CD4-positive, alpha-beta T cell (primary cell): ENCODE measurements at regions of chr10 and their contacts with region 1.

Region 1: DNA sequence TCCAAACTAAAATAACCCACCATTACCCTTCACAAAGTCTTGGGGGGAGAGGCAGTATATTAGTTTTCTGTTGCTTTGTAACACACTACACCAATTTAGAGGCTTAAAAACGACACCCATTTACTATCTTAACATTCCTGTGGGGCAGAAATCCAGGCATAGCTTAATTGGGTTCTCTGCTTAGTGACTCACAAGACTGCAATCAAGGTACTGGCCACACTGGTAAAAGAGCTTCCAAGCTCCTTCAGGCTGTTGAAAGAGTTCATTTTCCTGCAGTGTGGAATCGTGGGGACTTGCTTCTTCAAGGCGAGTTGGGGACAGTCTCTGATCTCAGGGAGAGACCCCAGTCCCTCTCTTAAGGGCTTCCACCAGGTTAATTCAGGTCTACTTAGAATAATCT is 139.1 kb downstream of the XPNPEP1 start:
- DNase-seq: no peak
- ATAC-seq: no peak
- H3K4me3 ChIP-seq: no peak overlapping the region
- H3K4me3 Mint-ChIP-seq: no peak overlapping the region
- H3K27ac ChIP-seq: no peak overlapping the region
- H3K27ac Mint-ChIP-seq: no peak overlapping the region
- H3K4me1 ChIP-seq: no peaks in the 10 kb centered on the region
- H3K4me1 Mint-ChIP-seq: no peaks in the 10 kb centered on the region
- H3K27me3 ChIP-seq: peaks cover 5% of the 10 kb centered on the region in 2 experiments
- H3K27me3 Mint-ChIP-seq: peaks cover 16% of the 10 kb centered on the region
- CTCF ChIP-seq: no peak

Region 2: DNA sequence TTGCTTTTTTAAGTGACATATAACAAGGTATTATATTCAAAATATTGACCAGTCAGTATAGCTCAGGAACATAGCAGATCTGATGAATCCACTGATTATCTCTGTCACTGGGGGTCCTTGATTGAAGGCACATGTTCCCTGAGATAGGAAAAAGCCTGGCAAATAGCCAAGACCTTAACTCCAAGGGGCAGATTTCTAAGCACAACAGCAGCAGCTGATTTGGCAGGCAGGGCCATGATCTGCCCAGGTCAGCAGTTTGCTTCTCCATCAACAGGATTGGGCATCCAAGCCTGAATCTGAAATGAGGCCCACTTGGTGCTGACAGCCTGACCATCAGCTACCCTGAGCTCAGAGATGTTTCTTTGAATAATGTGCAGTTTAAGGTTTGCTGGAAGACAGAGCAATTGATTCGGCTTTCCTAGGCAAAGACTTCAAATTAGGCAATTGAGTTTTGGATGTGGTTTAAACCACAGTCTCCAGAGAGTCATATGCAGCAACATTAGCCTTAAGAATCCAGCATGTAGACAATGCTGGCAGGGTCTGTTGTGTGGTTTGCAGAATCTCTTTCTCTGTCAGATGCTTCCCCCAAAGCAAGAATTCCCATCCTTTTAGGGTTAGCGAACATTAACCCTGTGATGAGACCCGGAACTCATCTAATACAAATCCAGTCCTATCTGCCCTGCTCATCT is 1645.2 kb after region 1 on chr10:
- CTCF ChIA-PET with region 1: no interaction called
- POLR2A ChIA-PET with region 1: no interaction called
- intact Hi-C with region 1: loop called in 1 of 2 experiments (anchors 10 kb)
- DNase-seq: no peak
- ATAC-seq: no peak
- H3K4me3 ChIP-seq: no peak overlapping the region
- H3K4me3 Mint-ChIP-seq: no peak overlapping the region
- H3K27ac ChIP-seq: no peak overlapping the region
- H3K27ac Mint-ChIP-seq: no peak overlapping the region
- H3K4me1 ChIP-seq: no peaks in the 10 kb centered on the region
- H3K4me1 Mint-ChIP-seq: no peaks in the 10 kb centered on the region
- H3K27me3 ChIP-seq: peaks cover 0 to 3% of the 10 kb centered on the region in 2 experiments
- H3K27me3 Mint-ChIP-seq: no peaks in the 10 kb centered on the region
- CTCF ChIP-seq: no peak